ENCODE measurements at regions of chr5 and their contacts with region 1.

Region 1: DNA sequence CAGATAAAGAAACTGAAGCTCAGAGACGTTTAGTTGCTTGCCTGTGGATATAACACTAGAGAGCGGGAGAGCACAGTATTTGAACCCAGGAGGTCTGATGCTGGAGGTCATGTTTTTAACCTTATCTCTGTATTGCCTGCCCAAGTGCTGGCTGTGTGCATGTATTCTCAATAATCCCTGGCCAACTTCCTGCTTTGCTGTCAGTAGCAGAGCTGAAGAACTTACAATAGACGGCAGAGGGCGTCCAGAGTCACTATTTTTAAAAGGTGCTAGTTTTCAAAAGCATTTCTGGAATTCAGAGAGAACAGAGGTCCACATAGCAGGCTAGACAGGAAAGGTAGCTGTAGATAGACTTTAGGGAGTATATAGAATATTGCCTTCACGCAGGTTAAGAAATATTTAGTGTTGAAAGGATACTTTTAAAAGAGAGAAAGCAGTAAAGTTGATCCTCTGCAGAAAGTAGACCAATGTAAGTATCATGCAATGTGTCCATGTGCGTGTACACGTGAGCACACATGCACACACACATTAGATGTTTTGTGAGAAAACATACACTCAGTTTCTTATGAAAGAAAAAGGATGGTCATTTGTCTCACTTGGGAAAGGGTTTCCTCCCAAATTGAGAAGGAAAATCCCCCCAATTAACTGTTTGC is 46.3 kb downstream of the PTCD2 start:
- DNase-seq: peak in 1 of 2 donors; percentile 90
- H3K4me3 ChIP-seq: no peak overlapping the region
- H3K27ac ChIP-seq: peak overlapping the region in 1 of 2 donors; percentile 10
- H3K4me1 ChIP-seq: peaks cover 0 to 23% of the 10 kb centered on the region in 2 donors
- H3K27me3 ChIP-seq: no peaks in the 10 kb centered on the region
- CTCF ChIP-seq: peak; percentile 77 to 86 (median 82)

Region 2: DNA sequence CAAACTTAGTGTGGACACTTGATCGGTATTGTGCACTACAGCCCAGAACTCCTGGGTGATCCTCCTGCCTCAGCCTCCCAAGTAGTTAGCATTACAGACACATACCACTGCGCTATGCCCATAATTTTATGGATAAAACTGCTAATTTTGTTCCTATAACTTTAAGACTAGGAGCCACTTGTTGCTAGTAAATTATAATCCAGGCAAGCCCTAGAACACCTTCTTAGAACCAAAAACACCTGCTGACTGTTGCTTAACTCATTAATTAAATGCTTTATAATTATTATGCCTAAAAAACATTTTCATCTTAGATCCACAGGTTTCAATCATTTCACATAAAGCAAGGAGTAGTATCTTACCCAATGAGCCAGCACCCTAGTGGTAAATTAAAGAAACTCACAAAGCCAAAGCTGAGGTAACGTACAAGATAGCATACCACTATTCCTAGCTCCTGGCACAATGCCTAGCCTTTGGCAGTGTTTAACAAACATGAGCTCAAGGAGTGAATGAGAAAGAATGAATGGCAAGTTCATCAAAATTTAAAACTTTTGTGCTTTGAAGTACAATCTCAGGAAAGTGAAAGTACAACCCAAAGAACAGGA is 51.8 kb before region 1 on chr5:
- intact Hi-C with region 1: no loop called
- DNase-seq: no peak
- H3K4me3 ChIP-seq: no peak overlapping the region
- H3K27ac ChIP-seq: no peak overlapping the region
- H3K4me1 ChIP-seq: peaks cover 0 to 6% of the 10 kb centered on the region in 2 donors
- H3K27me3 ChIP-seq: no peaks in the 10 kb centered on the region
- CTCF ChIP-seq: no peak

Region 3: GRCh38 chr5:72347801-72348305 is 18.6 kb before region 1 on chr5:
- intact Hi-C with region 1: no loop called
- DNase-seq: no peak
- H3K4me3 ChIP-seq: no peak overlapping the region
- H3K27ac ChIP-seq: no peak overlapping the region
- H3K4me1 ChIP-seq: no peaks in the 10 kb centered on the region
- H3K27me3 ChIP-seq: no peaks in the 10 kb centered on the region
- CTCF ChIP-seq: no peak

Region 4: GRCh38 chr5:72402959-72403628 is 36.6 kb after region 1 on chr5:
- intact Hi-C with region 1: loop called (anchors 5 kb)
- DNase-seq: peak in 1 of 2 donors; percentile 88
- H3K4me3 ChIP-seq: no peak overlapping the region
- H3K27ac ChIP-seq: peak overlapping the region; percentile 75 to 77
- H3K4me1 ChIP-seq: peaks cover 0 to 11% of the 10 kb centered on the region in 2 donors
- H3K27me3 ChIP-seq: no peaks in the 10 kb centered on the region
- CTCF ChIP-seq: peak in 2 of 3 experiments; percentile 27 to 35

Region 5: DNA sequence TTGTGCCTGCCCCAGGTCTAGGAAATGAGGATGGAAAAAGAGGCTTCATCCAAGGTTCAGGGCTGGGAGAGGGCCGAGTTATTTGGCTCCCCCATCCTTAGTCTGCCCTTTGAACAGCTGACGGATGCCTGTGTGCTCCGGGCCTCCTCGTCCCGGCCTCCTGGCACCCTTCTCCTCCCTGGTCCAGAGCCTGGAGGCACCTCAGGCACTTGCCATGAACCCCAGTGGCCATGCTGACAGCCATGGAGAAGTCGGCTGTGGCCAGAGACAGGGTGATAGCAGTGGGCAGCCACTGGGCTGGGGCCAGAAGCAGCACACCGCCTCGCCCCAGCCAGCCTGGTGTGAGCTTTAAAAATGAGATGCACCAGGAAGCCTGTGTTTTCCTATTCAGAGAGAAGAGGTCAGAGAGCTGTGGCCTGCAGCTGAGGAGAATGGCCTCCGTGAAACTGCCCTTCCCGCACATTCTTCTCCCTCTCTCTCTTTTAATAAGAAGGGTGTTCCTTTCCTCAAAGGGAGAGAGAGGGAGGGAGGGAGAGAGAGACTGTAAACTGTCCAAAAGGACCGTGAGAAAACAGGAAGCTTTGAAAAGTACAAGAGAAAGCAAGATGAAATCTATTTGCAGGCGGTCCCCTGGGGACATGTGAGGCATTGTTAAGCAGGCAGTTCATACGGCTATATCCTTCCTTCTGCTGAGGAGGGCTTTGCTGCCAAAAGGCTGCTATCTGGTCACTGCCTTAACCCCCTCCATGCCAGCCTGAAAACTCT is 85.5 kb after region 1 on chr5:
- intact Hi-C with region 1: loop called (anchors 2 kb)
- DNase-seq: peak in 1 of 2 donors; percentile 90
- H3K4me3 ChIP-seq: no peak overlapping the region
- H3K27ac ChIP-seq: peak overlapping the region; percentile 96 to 98
- H3K4me1 ChIP-seq: peaks cover 13 to 30% of the 10 kb centered on the region in 2 donors
- H3K27me3 ChIP-seq: no peaks in the 10 kb centered on the region
- CTCF ChIP-seq: no peak

Region 6: GRCh38 chr5:72523960-72524582 is 157.6 kb after region 1 on chr5:
- intact Hi-C with region 1: loop called (anchors 1 kb)
- DNase-seq: no peak
- H3K4me3 ChIP-seq: no peak overlapping the region
- H3K27ac ChIP-seq: no peak overlapping the region
- H3K4me1 ChIP-seq: peaks cover 0 to 2% of the 10 kb centered on the region in 2 donors
- H3K27me3 ChIP-seq: no peaks in the 10 kb centered on the region
- CTCF ChIP-seq: peak; percentile 43 to 60 (median 52)

Region 7: GRCh38 chr5:72552041-72552557 is 185.6 kb after region 1 on chr5:
- intact Hi-C with region 1: no loop called
- DNase-seq: no peak
- H3K4me3 ChIP-seq: no peak overlapping the region
- H3K27ac ChIP-seq: no peak overlapping the region
- H3K4me1 ChIP-seq: peaks cover 2 to 9% of the 10 kb centered on the region in 2 donors
- H3K27me3 ChIP-seq: no peaks in the 10 kb centered on the region
- CTCF ChIP-seq: no peak

Region 8: DNA sequence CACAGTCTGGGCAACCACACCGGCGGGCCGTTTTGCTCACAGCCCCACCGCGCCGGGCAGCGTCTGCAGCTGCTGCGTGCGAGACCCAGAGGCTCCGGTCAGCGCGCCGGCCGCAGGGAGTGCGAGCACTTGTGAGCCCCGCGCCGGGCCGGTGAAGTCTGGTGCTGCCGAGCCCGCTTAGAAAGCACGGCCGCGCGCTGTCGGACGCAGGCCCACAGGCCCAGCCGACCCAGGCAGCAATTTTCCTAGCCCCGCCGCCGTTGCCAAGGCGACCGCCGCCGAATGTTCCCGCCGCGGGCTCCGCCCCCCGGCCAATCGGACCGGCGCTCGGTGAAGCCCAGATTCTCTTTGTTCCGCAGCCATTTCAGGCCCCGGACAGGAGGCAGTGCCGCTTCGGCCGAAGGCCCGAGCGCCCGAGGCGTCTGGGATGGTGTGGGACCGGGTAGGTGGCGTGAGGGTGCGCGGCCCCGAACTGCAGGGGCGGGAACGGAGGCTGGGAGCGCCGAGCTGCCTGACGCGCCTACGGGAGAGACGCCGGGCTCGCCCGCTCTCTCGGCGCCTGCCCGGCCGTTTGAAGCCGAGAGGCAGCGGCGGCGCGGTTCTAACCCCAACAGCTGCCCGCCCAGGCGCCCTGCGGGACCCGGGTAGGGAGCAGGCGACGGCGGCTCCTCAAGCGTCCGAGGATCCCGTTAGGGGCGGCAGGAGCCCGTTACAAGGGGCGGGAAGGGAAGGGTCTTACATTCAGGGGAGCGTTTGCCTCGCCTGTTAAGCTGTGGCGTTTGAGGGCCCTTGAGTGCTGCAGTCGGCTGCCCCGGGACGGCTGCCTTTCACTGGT is 450.1 kb after region 1 on chr5 and contains the start of gene TNPO1:
- intact Hi-C with region 1: loop called (anchors 5 kb)
- DNase-seq: peak; percentile 69 to 95
- H3K4me3 ChIP-seq: peak within 1 kb of the TSS; percentile 77 to 89
- H3K27ac ChIP-seq: peak within 1 kb of the TSS; percentile 98 to 99
- H3K4me1 ChIP-seq: peaks cover 0 to 14% of the 10 kb centered on the region in 2 donors
- H3K27me3 ChIP-seq: no peaks in the 10 kb centered on the region
- CTCF ChIP-seq: no peak
- total RNA-seq, gene TNPO1: 48.5 TPM

Region 9: GRCh38 chr5:72847989-72848473 is 481.6 kb after region 1 on chr5:
- intact Hi-C with region 1: loop called (anchors 10 kb)
- DNase-seq: peak; percentile 59 to 94
- H3K4me3 ChIP-seq: peak overlapping the region; percentile 89 to 97
- H3K27ac ChIP-seq: peak overlapping the region; percentile 90 to 94
- H3K4me1 ChIP-seq: peaks cover 8 to 41% of the 10 kb centered on the region in 2 donors
- H3K27me3 ChIP-seq: no peaks in the 10 kb centered on the region
- CTCF ChIP-seq: peak in 2 of 3 experiments; percentile 3 to 17